Right ventricle myocardium inferior (tissue), 1 donor: ENCODE measurements at regions of chr2 and their contacts with region 1.

Region 1: DNA sequence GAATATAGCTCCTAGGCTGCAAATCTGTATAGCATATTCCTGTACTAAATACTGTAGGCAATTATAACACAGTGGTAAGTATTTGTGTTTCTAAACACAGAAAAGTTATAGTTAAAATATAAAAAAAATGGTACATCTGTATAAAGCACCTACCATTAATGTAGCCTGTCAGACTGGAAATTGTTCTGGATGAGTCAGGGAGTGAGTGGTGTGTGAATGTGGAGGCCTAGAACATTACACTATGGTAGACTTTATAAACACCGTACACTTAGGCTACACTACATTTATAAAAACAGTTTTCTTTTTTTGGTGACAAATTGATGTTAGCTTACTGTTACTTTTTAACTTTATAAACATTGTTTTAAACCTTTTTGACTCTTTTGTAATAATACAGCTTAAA is 226.3 kb downstream of the CCDC85A start:
- DNase-seq: no peak
- ATAC-seq: no peak

Region 2: DNA sequence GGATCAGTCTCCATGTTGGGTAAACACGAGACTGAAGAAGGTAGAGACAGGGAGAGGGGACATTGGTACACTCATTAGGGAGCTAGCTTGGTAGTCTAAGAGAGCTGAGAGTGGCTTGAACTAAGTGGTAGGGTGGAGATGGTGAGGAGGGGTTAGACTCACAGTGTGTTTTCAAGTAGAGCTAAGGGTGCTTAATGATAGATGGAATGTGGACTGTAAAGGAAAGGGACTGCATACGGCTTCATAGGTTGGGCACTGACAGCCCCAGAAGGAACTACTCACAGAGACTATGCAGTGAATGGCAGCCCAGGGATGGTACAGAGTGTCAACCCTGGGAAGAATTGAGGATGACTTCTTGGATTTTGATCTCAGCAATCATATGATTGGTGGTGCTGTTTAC is 48.3 kb before region 1 on chr2:
- intact Hi-C with region 1: loop called (anchors 2 kb)
- DNase-seq: no peak
- ATAC-seq: no peak